K562 (cell line): ENCODE measurements at regions of chr2 and their contacts with region 1.

Region 1: GRCh38 chr2:71545572-71546274 is 92.4 kb downstream of the DYSF start:
- DNase-seq: peak; percentile 63 to 74 (median 64)
- ATAC-seq: peak; percentile 93
- H3K4me3 ChIP-seq: no peak overlapping the region
- H3K27ac ChIP-seq: no peak overlapping the region
- H3K4me1 ChIP-seq: 0 out of 5 replicates have a peak, but pooled peaks cover 0 to 3% of the 10 kb centered on the region in 2 experiments
- H3K27me3 ChIP-seq: peaks cover 7 to 30% of the 10 kb centered on the region in 2 experiments; a peak in 4 of 5 replicates
- CTCF ChIP-seq: peak; percentile 80 to 89 (median 81)
- EP300 ChIP-seq: no peak
- POLR2A ChIP-seq: no peak
- RAD21 ChIP-seq: peak; percentile 82 to 84

Region 2: DNA sequence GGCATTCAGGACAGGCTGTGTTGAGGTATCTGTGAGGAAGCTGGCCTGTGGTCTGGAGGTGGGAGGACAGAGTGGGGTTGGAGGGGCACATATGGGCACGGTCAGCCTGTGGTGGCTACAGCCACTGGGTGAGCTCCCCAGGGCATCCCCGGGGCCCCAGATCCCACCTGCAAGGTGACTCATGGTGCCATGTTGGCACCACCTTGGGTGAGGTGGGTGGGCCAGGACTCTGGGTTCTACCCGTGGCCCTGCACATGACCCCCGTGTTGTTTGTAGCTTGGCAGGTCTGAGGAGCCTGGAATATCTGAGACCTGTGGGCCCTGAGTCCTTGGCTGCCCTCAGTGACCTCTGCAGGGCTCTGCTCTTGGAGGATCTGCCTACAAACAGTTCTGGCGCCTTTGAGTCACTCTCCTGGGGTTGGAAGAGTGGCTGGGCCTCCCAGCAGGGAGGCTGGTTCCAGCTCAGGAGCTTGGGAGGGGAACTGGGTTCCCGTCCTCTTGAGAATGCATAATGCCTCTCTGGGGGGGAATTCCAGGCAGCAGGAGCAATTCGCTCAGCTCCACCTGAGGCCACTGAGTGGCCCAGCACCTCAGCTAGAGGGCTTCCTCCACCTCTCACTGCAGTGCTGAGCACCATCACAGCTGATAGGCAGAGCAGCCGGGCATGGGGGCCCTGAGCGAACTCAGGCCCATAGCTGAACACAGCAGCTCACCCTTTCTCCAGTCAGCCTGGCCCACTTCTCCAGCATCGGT is 12.8 kb after region 1 on chr2:
- CTCF ChIA-PET with region 1: no interaction called
- POLR2A ChIA-PET with region 1: no interaction called
- in situ Hi-C with region 1: no loop called
- intact Hi-C with region 1: no loop called
- DNase-seq: no peak
- ATAC-seq: peak; percentile 50
- H3K4me3 ChIP-seq: no peak overlapping the region
- H3K27ac ChIP-seq: no peak overlapping the region
- H3K4me1 ChIP-seq: no peaks in the 10 kb centered on the region
- H3K27me3 ChIP-seq: peaks cover 0 to 12% of the 10 kb centered on the region in 2 experiments; a peak in 2 of 5 replicates
- CTCF ChIP-seq: no peak
- EP300 ChIP-seq: no peak
- POLR2A ChIP-seq: no peak
- RAD21 ChIP-seq: no peak

Region 3: GRCh38 chr2:71609958-71610357 is 64.2 kb after region 1 on chr2:
- CTCF ChIA-PET with region 1: no interaction called
- POLR2A ChIA-PET with region 1: no interaction called
- in situ Hi-C with region 1: no loop called
- intact Hi-C with region 1: loop called (anchors 5 kb)
- DNase-seq: peak in 1 of 4 experiments; percentile 21
- ATAC-seq: peak; percentile 69
- H3K4me3 ChIP-seq: no peak overlapping the region
- H3K27ac ChIP-seq: no peak overlapping the region
- H3K4me1 ChIP-seq: peaks cover 8 to 10% of the 10 kb centered on the region in 2 experiments
- H3K27me3 ChIP-seq: peaks cover 0 to 63% of the 10 kb centered on the region in 2 experiments; a peak in 2 of 5 replicates
- CTCF ChIP-seq: peak; percentile 13 to 56 (median 37); a peak in 3 of 6 replicates
- EP300 ChIP-seq: no peak
- POLR2A ChIP-seq: no peak
- RAD21 ChIP-seq: peak; percentile 34 to 57

Region 4: DNA sequence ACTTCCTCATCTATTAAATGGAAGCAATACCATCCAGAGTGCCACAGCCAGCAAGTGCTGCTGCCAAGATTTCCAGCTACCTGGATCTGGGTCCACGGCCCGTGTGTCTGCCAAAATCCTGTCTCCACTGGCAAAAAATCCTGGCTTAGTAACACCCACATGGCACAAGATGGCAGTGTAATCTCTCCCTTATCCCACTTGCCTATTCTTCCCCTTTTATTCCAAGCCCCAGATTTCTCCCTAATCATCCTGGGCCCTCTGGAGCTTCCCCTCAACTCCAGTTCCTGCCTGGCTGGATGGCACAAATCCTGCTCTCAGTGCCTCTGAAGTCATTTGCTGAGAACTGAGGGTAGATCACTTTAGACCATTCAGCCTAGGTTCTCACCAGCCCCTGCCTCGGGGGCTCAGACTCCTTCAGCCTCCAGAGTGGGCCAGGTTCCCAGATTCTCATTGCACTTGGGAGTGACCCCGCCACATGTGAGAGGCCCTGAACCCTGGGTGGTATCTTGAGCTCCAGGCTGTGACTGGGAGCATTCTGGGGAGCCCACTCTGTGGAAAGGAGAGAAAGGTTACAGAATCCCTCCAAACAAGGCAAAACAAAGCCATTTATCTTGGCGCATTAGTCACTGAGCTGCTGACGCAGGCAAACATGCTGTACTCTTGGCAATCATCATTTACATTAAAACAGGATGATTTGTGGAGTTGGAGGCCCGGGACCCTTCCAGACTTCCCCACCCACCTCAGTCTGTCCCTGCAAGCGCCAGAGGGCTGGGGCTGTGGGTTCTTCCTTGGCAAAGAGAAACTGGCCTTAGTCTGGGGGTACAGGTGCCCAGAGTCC is 233.4 kb after region 1 on chr2:
- CTCF ChIA-PET with region 1: no interaction called
- POLR2A ChIA-PET with region 1: no interaction called
- in situ Hi-C with region 1: no loop called
- intact Hi-C with region 1: no loop called
- DNase-seq: no peak
- ATAC-seq: no peak
- H3K4me3 ChIP-seq: no peak overlapping the region
- H3K27ac ChIP-seq: no peak overlapping the region
- H3K4me1 ChIP-seq: no peaks in the 10 kb centered on the region
- H3K27me3 ChIP-seq: peaks cover 0 to 20% of the 10 kb centered on the region in 2 experiments; a peak in 2 of 5 replicates
- CTCF ChIP-seq: peak in 1 of 3 experiments; percentile 12; a peak in 1 of 6 replicates
- EP300 ChIP-seq: no peak
- POLR2A ChIP-seq: no peak
- RAD21 ChIP-seq: no peak

Region 5: DNA sequence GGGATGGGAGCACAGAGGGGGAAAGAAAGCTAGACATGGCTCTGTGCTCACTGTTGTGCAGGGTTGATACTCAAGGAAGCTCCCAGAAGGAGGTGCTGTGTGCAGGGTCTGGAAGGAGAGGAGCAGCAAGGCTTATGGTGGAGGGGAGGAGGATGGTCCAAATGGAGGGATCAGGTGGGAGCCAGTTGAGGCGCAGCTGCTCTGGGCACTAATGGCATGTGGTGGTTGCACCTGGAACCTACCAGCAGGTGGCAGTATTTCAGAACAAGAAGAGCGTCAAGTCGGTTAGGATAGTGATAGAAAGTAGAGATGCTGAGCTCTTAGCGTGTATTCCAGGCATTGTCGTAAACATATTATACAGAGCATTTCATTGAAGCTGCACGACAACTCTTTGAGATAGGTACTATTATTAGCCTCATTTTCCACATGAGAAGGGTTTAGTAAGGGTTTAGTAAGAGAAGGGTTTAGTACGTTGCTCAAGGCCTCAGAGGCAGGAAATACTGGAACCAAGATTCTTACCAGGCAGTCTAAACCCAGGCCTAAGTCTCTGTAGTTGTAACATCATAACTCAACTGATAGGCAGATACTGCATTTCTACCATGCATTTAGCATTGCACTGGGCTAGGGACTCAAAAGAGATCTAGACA is 378.3 kb after region 1 on chr2:
- CTCF ChIA-PET with region 1: no interaction called
- POLR2A ChIA-PET with region 1: no interaction called
- in situ Hi-C with region 1: no loop called
- intact Hi-C with region 1: loop called (anchors 5 kb)
- DNase-seq: peak; percentile 72 to 79 (median 78)
- ATAC-seq: peak; percentile 95
- H3K4me3 ChIP-seq: no peak overlapping the region
- H3K27ac ChIP-seq: no peak overlapping the region
- H3K4me1 ChIP-seq: no peaks in the 10 kb centered on the region; a peak in 1 of 5 replicates
- H3K27me3 ChIP-seq: peaks cover 2 to 17% of the 10 kb centered on the region in 2 experiments; a peak in 3 of 5 replicates
- CTCF ChIP-seq: peak; percentile 78 to 84 (median 81)
- EP300 ChIP-seq: no peak
- POLR2A ChIP-seq: no peak
- RAD21 ChIP-seq: peak; percentile 86 to 89

Region 6: DNA sequence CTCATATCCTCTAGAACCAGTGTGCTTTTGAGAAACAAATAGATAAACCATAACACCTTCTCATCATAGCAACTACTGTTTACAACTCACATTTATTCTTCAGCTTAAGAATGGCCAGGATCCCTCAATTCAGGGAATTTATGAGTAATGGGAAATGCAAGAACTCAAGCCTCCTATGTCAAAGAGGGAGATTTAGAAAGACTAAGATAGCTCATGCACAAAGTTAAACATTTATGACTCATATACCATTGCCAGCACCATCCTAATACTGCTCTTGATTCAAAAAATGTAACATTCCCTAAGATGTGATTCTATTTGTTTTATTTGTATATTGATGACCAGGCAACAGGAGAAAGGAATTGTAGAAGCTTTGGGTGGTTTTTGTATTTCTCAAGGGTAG is 429.1 kb after region 1 on chr2:
- CTCF ChIA-PET with region 1: no interaction called
- POLR2A ChIA-PET with region 1: no interaction called
- in situ Hi-C with region 1: no loop called
- intact Hi-C with region 1: no loop called
- DNase-seq: no peak
- ATAC-seq: no peak
- H3K4me3 ChIP-seq: no peak overlapping the region
- H3K27ac ChIP-seq: no peak overlapping the region
- H3K4me1 ChIP-seq: no peaks in the 10 kb centered on the region; a peak in 1 of 5 replicates
- H3K27me3 ChIP-seq: no peaks in the 10 kb centered on the region
- CTCF ChIP-seq: no peak
- EP300 ChIP-seq: no peak
- POLR2A ChIP-seq: no peak
- RAD21 ChIP-seq: no peak

Region 7: DNA sequence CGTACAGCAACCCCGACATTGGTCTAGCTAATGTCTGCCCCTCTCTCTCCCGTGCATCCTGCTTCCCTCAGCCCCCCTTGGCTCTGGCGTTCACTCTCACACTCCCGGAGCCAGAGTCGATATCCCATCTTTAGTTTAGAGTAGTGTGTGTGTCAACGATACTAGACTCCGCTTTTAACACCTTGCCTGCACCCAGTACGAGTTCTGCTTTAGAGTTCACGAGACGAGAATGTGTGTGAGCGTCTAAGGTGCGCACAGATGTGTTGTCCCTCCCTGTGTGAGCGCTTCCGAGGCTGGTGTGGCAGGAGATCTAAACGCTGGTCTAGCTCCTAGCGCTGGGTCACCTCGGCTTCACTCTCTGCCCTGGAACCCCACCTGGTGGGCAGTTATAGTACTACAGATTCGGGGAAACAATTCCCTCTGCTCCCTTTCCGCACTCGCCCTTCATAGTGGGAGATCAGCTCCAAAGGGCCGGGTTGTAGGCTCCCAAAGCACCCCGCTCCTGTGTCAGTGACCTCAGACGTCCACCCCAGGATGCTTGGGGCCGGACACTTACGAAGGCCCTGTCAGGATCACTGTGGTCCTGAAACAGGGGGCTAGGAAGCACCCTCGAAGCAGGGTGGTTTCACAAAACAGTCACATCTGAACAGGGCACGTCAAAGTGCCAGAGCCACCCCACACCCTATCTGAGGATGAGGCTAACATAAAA is 604.6 kb after region 1 on chr2:
- CTCF ChIA-PET with region 1: interaction called, 8 read pairs
- POLR2A ChIA-PET with region 1: interaction called, 4 read pairs
- in situ Hi-C with region 1: no loop called
- intact Hi-C with region 1: loop called (anchors 5 kb)
- DNase-seq: peak; percentile 74 to 81 (median 76)
- ATAC-seq: peak; percentile 93
- H3K4me3 ChIP-seq: no peak overlapping the region
- H3K27ac ChIP-seq: no peak overlapping the region
- H3K4me1 ChIP-seq: peaks cover 0 to 20% of the 10 kb centered on the region in 2 experiments; a peak in 2 of 5 replicates
- H3K27me3 ChIP-seq: peaks cover 13 to 63% of the 10 kb centered on the region in 2 experiments; a peak in 4 of 5 replicates
- CTCF ChIP-seq: peak; percentile 82 to 87 (median 83)
- EP300 ChIP-seq: no peak
- POLR2A ChIP-seq: no peak
- RAD21 ChIP-seq: peak; percentile 92 to 94

Region 8: GRCh38 chr2:72745679-72746368 is 1200.1 kb after region 1 on chr2:
- CTCF ChIA-PET with region 1: no interaction called
- POLR2A ChIA-PET with region 1: no interaction called
- in situ Hi-C with region 1: loop called (anchors 5 kb)
- intact Hi-C with region 1: loop called (anchors 10 kb)
- DNase-seq: peak; percentile 17 to 76 (median 32)
- ATAC-seq: 0 out of 3 replicates have a peak, but pooled peaks have one; percentile 56
- H3K4me3 ChIP-seq: no peak overlapping the region
- H3K27ac ChIP-seq: no peak overlapping the region
- H3K4me1 ChIP-seq: no peaks in the 10 kb centered on the region
- H3K27me3 ChIP-seq: no peaks in the 10 kb centered on the region
- CTCF ChIP-seq: peak; percentile 38 to 81 (median 54); a peak in 5 of 6 replicates
- EP300 ChIP-seq: no peak
- POLR2A ChIP-seq: no peak
- RAD21 ChIP-seq: peak; percentile 84 to 92